ENCODE measurements at regions of chr20 and their contacts with region 1.

Region 1: DNA sequence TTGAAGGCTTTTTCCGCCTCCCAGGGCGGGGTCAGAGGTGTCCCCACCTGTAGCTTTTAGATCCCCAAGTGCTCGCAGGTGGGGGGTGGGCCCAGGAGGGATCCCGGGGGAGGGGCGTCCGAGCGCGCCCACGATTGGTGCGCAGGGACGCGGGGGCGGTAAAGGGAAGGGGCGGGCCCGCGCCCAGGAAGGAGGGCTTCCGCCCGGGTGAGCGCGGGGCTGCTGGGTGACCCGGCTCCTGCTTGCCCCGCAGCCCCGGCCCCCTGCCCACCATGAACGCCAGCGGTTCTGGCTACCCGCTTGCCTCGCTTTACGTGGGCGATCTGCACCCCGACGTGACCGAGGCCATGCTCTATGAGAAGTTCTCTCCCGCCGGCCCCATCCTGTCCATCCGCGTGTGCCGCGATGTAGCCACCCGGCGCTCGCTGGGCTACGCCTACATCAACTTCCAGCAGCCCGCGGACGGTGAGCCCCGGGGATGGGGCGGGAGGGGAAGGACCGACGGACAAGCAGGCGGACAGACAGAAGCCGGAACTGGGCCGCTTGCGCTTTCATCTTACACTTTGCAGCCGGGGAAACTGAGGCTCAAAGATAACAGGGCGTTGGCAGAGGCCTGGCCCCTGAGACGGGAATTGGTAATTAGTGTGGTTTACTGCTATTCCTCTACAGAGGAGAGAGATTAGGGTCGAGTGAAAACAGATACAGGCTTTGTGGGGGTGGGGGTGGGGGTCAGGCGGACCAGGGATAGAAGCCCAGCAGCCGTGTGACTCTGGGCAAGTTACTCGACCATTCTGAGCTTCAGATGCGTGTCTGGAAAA is at the start of gene PABPC1L:
- DNase-seq: no peak
- H3K4me3 ChIP-seq: peak within 1 kb of the TSS; percentile 61 to 70 (median 66)
- H3K27ac ChIP-seq: no peak within 1 kb of the TSS
- H3K4me1 ChIP-seq: peaks cover 0 to 19% (median 18%) of the 10 kb centered on the region in 4 donors
- H3K27me3 ChIP-seq: no peaks in the 10 kb centered on the region
- CTCF ChIP-seq: no peak
- EP300 ChIP-seq: no peak
- POLR2A ChIP-seq: no peak
- total RNA-seq, gene PABPC1L: 2.0 to 5.9 (median 2.9) TPM

Region 2: DNA sequence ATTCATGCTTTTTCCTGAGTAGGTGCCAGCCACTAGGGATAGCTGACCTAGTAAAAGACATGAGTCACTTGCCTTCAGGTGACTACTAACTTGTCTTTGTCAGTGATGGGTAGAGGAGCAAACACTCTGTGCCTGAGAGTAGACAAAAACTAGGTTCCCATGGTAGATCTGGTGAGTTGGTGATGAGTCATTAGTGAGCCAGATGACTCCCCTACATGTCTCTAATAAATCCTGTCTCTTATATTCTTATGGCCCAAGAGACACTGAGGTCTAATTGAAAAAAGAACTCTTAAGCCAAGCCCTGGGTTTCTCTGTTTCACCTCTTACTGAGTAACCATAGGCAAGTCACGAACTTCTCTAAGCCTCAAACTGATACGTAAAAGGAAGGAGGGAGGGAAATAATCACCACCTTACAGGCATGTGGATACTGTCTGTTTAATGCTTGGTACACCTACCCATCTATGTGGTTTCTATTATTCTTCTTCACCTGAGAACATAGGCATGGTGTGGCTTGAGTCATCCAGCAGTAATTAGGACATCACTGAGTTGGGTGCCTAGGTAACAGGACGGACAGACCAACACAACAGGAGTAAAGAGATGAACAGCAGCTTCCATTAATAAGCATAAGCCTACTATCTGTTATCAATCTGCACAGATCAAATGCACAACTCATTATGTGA is 414.1 kb before region 1 on chr20:
- intact Hi-C with region 1: no loop called
- DNase-seq: no peak
- H3K4me3 ChIP-seq: no peak overlapping the region
- H3K27ac ChIP-seq: peak overlapping the region; percentile 26 to 60 (median 56)
- H3K4me1 ChIP-seq: peaks cover 8 to 24% (median 19%) of the 10 kb centered on the region in 4 donors
- H3K27me3 ChIP-seq: no peaks in the 10 kb centered on the region
- CTCF ChIP-seq: no peak
- EP300 ChIP-seq: no peak
- POLR2A ChIP-seq: no peak

Region 3: DNA sequence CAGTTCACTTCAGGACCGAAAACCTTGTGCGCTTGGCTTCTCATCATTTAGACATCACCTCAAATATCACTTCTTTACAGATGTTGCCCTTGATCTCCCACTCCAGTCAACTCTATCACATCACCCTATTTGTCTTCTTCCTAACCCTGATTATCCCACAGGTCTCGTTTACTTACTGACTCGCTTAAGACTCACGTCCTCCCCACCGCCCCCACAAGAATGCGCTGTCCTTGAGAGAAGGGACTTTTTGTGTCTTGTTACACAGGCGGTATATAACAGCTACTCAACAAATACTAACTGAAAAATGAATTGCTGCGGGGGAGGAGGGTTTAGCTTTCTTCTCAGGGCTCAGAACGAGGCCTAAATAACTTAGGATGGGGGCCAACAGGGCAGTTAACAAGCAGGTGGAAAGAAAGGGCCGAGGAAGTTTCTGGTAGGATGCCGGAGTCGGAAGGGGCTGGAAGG is 49.6 kb after region 1 on chr20:
- intact Hi-C with region 1: loop called (anchors 5 kb)
- DNase-seq: no peak
- H3K4me3 ChIP-seq: peak overlapping the region; percentile 70 to 94 (median 79)
- H3K27ac ChIP-seq: peak overlapping the region; percentile 78 to 89 (median 86)
- H3K4me1 ChIP-seq: peaks cover 11 to 28% (median 22%) of the 10 kb centered on the region in 4 donors
- H3K27me3 ChIP-seq: no peaks in the 10 kb centered on the region
- CTCF ChIP-seq: peak in 1 of 3 experiments; percentile 3
- EP300 ChIP-seq: no peak
- POLR2A ChIP-seq: no peak